ENCODE measurements at regions of chr11 and their contacts with region 1.

Region 1: DNA sequence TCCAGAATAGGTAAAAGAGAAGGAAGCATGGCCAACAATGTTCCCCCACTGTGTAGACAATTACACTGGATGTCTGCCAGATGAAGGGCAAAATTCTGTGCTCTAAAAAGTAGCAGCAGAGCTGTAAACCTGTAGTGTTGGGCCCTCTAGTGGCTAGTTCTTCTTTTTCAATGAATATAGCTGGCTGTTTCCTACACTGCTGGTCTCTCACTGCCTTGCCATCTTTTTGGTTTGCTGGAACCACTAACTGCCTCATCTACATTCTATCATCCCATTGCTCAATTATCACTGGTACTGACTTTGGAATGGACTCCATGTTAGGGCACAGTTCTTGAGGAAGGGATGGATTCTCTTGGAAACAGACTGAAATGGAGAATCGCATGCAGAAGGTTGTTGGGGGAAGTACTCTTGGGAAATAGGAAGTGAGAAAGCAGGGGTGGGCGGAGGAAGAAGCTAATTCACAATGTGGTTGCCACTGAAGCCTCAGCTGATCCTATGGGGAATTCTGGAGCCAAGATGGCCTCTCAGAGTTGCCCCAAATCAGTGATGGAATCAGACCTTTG is 17.9 kb downstream of the KCNE3 start:
- DNase-seq: peak; percentile 16
- H3K4me3 ChIP-seq: no peak overlapping the region
- H3K27me3 ChIP-seq: peaks cover 3% of the 10 kb centered on the region
- CTCF ChIP-seq: peak; percentile 69

Region 2: DNA sequence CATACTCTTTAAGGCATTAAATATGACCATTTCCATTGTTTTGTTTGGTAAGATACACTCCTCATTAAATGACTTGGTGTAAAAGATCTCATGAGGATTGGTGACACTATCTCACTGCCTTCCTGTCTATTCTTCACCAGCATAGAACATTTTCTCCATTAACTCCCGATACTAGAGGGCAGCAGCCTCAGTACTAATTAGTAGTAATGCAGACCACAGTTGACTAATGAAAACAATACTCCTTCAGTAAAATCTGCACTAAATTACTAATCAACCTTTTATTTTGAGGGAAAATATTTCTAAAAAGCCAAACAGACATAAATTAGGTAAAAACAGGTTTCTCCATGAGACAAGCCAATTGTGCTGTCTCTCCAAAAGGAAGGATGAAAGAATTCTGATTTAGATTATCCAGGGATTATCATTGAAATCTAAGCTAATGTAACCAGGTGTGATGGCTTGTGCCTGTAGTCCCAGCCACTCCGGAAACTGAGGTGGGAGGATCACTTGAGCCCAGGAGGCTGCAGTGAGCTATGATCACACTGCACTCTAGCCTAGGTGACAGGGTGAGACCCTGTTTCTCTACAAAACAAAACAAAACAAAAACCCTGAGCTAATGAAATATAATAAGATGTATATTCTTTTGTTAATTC is 60.6 kb before region 1 on chr11:
- CTCF ChIA-PET with region 1: interaction called, 17 read pairs
- POLR2A ChIA-PET with region 1: no interaction called
- DNase-seq: no peak
- H3K4me3 ChIP-seq: no peak overlapping the region
- H3K27me3 ChIP-seq: no peaks in the 10 kb centered on the region
- CTCF ChIP-seq: peak; percentile 81

Region 3: DNA sequence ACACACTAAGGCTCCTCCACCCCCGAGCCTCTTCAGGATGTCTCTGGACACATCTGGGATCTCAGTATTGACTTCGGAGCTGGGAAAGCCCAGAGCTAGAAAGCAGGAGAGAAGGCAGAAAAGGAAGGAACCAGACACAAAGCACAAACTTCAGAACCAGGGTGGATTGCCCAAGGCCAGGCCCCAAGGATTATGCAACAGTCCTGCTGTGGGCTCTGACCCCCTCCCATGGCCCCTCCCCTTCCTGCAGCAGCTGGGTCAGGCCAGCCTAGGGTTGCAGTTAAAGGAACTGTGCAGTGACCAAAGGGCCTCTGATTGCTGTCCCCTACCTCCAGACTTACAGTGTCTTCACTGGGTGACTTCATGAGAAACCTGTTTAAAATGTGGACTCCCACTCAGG is 12.6 kb after region 1 on chr11:
- CTCF ChIA-PET with region 1: interaction called, 31 read pairs
- POLR2A ChIA-PET with region 1: no interaction called
- DNase-seq: no peak
- H3K4me3 ChIP-seq: no peak overlapping the region
- H3K27me3 ChIP-seq: peaks cover 20% of the 10 kb centered on the region
- CTCF ChIP-seq: no peak

Region 4: GRCh38 chr11:74543991-74544390 is 94.5 kb after region 1 on chr11:
- CTCF ChIA-PET with region 1: interaction called, 10 read pairs
- POLR2A ChIA-PET with region 1: no interaction called
- DNase-seq: no peak
- H3K4me3 ChIP-seq: no peak overlapping the region
- H3K27me3 ChIP-seq: peaks cover 7% of the 10 kb centered on the region; the same call in 1 of the 2 replicates
- CTCF ChIP-seq: no peak

Region 5: DNA sequence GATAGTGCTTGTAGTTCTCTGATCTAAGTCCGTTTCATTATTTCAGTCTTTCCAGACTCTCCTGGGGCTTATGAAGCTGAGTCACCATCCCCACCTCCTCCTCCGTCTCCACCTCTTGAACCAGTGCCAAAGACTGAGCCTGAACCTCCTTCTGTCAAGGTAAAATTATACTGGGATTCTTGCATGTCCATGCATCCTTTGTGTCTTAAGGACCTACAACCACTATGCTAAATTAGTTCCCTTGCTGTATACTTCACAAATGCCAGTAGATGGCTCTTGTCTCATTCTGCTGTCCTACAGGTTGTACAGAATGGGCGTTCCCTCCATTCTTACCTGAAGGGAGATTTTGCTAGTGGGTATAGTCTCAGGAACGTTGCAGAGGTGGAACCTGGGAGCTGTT is 185.1 kb after region 1 on chr11:
- CTCF ChIA-PET with region 1: no interaction called
- POLR2A ChIA-PET with region 1: no interaction called
- DNase-seq: no peak
- H3K4me3 ChIP-seq: no peak overlapping the region
- H3K27me3 ChIP-seq: no peaks in the 10 kb centered on the region
- CTCF ChIP-seq: peak; percentile 49

Region 6: DNA sequence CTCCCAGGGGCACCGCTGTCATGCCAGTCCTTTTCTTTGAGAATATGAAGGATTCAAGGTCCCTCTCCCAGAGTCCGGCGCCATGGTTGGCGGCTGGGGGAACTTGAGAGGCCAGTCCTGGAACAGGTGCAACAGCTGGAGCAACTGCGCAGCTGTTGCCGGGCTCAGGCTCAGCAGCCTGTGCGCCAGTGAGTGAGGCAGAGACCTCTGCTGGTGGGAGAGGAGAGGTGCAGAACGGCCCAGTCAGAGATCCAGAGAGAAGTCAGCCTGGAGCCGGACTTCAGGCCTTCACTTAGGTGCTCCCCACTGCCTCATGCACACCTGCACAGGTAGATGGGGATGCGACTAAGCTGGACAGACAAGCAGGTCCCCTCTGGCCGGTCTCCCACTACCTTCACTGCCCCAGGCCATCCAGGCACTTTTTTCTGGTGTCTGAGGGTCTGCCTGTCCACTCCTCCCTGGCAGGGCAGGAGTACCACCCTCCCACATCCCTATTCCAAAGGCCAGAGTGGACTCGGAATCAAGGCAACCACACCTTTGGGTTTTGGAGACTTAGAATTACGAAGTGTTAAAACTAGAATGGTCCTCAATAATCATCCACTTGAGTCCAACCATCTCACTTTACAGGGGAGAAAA is 277.2 kb after region 1 on chr11:
- CTCF ChIA-PET with region 1: interaction called, 38 read pairs
- POLR2A ChIA-PET with region 1: no interaction called
- DNase-seq: no peak
- H3K4me3 ChIP-seq: no peak overlapping the region
- H3K27me3 ChIP-seq: peaks cover 40% of the 10 kb centered on the region
- CTCF ChIP-seq: peak; percentile 99